Ascending aorta (tissue), 2 donors: ENCODE measurements at regions of chr17 and their contacts with region 1.

Region 1: GRCh38 chr17:81871387-81872230 is 472 bp upstream of the ARHGDIA start:
- DNase-seq: peak; percentile 74 to 96
- H3K4me3 ChIP-seq: peak overlapping the region; percentile 83 to 95
- H3K27ac ChIP-seq: peak overlapping the region; percentile 96 to 99
- H3K4me1 ChIP-seq: peaks cover 18 to 32% of the 10 kb centered on the region in 2 donors
- H3K27me3 ChIP-seq: no peaks in the 10 kb centered on the region
- CTCF ChIP-seq: peak; percentile 27 to 53 (median 53)

Region 2: DNA sequence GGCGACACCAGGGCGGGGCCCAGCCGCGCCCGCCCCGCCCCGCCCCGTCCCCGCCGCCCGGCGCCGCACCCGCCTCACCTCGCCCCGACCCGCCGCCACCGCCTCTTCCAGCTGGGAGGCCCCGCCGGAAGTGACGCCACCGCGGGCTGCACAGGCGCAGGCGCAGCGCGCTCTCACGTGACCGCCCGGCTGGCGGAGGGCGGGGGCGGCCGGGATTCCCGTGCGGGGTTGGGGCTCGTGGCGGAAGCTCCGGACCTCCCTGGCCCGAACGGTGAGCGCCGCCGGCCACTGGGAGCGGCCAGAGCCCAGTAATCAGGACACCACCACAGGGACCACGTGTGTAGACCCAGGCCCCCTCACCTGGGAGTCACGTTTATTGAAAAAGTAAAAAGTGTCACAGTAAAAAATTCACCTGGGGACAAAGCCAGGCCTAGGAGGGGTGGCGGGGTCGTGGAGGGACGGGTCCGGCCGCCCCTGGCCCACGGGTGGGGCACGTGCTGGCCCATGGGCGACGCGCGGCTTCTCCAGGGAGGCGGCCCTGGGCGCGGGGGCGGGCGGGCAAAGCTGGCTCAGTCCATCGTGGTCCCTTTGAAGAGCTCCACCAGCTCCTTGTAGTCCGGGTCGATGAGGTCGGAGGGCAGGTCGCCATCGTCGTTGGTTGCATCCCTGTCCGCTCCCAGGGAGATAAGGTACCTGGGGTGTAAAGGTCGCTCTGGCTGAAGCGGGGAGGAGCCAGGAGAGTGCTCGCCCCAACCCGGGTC is 38.3 kb before region 1 on chr17 and contains the start of gene MCRIP1:
- intact Hi-C with region 1: loop called (anchors 5 kb)
- DNase-seq: peak; percentile 77 to 97
- H3K4me3 ChIP-seq: peak within 1 kb of the TSS; percentile 92 to 94
- H3K27ac ChIP-seq: peak within 1 kb of the TSS; percentile 91 to 94
- H3K4me1 ChIP-seq: peaks cover 16 to 22% of the 10 kb centered on the region in 2 donors
- H3K27me3 ChIP-seq: no peaks in the 10 kb centered on the region
- CTCF ChIP-seq: no peak
- total RNA-seq, gene MCRIP1: 149 TPM

Region 3: DNA sequence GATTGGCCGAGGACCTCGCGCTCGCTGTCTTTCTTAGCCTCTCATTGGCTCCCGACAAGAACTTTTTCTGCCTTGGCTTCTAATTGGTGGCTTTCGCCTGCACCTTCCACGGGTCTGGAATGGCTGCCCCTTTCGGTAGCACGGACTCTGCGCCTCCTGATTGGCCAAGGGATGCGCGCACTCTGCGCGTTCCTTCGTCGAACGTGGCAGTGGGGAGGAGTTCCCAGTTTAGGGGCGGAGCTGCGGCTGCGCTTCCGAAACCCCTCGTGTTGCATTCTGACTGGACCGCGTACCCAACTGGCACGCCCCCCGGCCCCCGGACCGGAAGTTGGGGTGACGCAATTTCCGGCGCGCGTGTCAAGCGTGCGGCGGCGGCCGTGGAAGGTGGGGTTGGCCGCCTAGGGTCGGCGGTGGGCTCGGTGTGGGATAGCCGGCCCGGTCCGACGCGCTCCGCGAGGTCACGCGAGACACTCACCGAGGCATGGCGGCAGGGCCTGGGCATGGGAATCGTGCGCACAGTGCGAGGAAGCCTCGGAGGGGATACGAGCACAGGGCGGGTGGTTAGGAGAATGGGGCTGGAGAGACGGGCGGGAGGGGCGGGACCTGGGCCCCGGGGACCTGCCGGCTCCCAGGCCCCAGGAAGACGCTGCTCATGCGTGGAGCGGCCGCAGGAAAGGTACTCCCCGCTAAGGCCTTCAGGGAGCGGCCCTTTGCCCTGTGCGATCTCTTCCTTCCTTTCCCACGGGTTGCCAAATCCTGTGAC is 10.7 kb before region 1 on chr17:
- intact Hi-C with region 1: loop called (anchors 1 kb)
- DNase-seq: peak; percentile 99 to 100
- H3K4me3 ChIP-seq: peak overlapping the region; percentile 83 to 90
- H3K27ac ChIP-seq: peak overlapping the region; percentile 96
- H3K4me1 ChIP-seq: peaks cover 10 to 29% of the 10 kb centered on the region in 2 donors
- H3K27me3 ChIP-seq: no peaks in the 10 kb centered on the region
- CTCF ChIP-seq: no peak

Region 4: GRCh38 chr17:81890447-81891299 is 19.1 kb after region 1 on chr17:
- intact Hi-C with region 1: loop called (anchors 2 kb)
- DNase-seq: peak in 1 of 2 donors; percentile 62
- H3K4me3 ChIP-seq: peak overlapping the region; percentile 80 to 96
- H3K27ac ChIP-seq: peak overlapping the region; percentile 80 to 89
- H3K4me1 ChIP-seq: peaks cover 12 to 19% of the 10 kb centered on the region in 2 donors
- H3K27me3 ChIP-seq: no peaks in the 10 kb centered on the region
- CTCF ChIP-seq: no peak